Activated CD8-positive, alpha-beta T cell treated with anti-CD3 and anti-CD28 coated beads, Interleukin-2, amount 10 ng/mL, durations not matched to agents 7 days and 5 days (primary cell): ENCODE measurements at regions of chr5 and their contacts with region 1.

Region 1: GRCh38 chr5:142922223-142922952 is 152.2 kb downstream of the ARHGAP26 start:
- DNase-seq: no peak
- ATAC-seq: no peak
- H3K4me3 Mint-ChIP-seq: no peak overlapping the region
- H3K27ac Mint-ChIP-seq: no peak overlapping the region
- H3K4me1 Mint-ChIP-seq: peaks cover 41% of the 10 kb centered on the region
- H3K27me3 Mint-ChIP-seq: no peaks in the 10 kb centered on the region

Region 2: GRCh38 chr5:142826741-142827732 is 95.4 kb before region 1 on chr5:
- CTCF ChIA-PET with region 1: no interaction called
- POLR2A ChIA-PET with region 1: no interaction called
- DNase-seq: peak; percentile 48
- ATAC-seq: peak; percentile 73
- H3K4me3 Mint-ChIP-seq: no peak overlapping the region
- H3K27ac Mint-ChIP-seq: no peak overlapping the region
- H3K4me1 Mint-ChIP-seq: peaks cover 54% of the 10 kb centered on the region
- H3K27me3 Mint-ChIP-seq: no peaks in the 10 kb centered on the region

Region 3: DNA sequence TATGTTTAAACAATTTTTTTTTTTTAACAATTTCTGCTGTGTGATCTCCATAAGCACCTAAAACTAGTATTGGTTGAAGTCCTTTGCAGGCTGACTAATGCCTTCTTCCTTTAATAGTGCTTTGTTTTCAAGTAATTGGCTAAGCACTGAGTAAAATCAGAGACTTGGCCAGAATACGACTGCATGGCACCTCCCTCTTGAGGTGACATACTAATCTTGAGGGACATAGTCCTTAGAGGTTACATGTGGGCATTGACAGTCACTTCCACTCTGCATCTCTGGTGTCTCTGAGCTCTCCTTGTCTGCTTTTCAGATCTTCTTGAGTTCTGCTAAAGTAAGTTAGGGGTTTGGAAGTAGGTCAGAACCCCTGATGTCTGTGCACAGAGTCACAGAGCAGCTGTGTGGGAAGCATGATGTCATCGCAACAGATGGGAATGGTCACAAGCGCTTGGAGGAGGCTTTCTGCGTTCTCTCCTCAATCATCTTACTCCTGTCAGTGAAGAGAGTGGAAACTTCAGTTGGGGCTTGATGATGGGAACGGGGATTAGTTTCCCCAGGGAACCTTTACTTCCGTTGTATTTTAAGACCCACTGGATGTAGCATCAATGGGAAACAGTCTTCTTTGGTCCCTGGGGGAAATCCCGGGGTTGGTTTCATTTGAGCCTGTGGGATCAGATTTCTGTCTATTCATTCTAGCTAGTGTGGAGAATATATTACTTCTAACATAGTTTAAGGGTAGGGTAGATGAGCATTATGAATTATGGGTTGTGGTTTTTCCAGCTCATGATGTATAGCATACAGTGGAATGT is 15.3 kb before region 1 on chr5:
- CTCF ChIA-PET with region 1: no interaction called
- POLR2A ChIA-PET with region 1: no interaction called
- DNase-seq: no peak
- ATAC-seq: no peak
- H3K4me3 Mint-ChIP-seq: no peak overlapping the region
- H3K27ac Mint-ChIP-seq: no peak overlapping the region
- H3K4me1 Mint-ChIP-seq: no peaks in the 10 kb centered on the region
- H3K27me3 Mint-ChIP-seq: no peaks in the 10 kb centered on the region

Region 4: GRCh38 chr5:142959683-142960657 is 37.6 kb after region 1 on chr5:
- CTCF ChIA-PET with region 1: interaction called, 14 read pairs
- POLR2A ChIA-PET with region 1: no interaction called
- DNase-seq: no peak
- ATAC-seq: peak; percentile 49
- H3K4me3 Mint-ChIP-seq: no peak overlapping the region
- H3K27ac Mint-ChIP-seq: no peak overlapping the region
- H3K4me1 Mint-ChIP-seq: peaks cover 30% of the 10 kb centered on the region
- H3K27me3 Mint-ChIP-seq: no peaks in the 10 kb centered on the region

Region 5: GRCh38 chr5:143008809-143009521 is 86.6 kb after region 1 on chr5:
- CTCF ChIA-PET with region 1: interaction called, 52 read pairs
- POLR2A ChIA-PET with region 1: no interaction called
- DNase-seq: peak; percentile 90
- ATAC-seq: peak; percentile 93
- H3K4me3 Mint-ChIP-seq: peak overlapping the region; percentile 43
- H3K27ac Mint-ChIP-seq: peak overlapping the region; percentile 90
- H3K4me1 Mint-ChIP-seq: peaks cover 76% of the 10 kb centered on the region
- H3K27me3 Mint-ChIP-seq: no peaks in the 10 kb centered on the region

Region 6: GRCh38 chr5:143041972-143042770 is 119.8 kb after region 1 on chr5:
- CTCF ChIA-PET with region 1: no interaction called
- POLR2A ChIA-PET with region 1: no interaction called
- DNase-seq: no peak
- ATAC-seq: no peak
- H3K4me3 Mint-ChIP-seq: no peak overlapping the region
- H3K27ac Mint-ChIP-seq: no peak overlapping the region
- H3K4me1 Mint-ChIP-seq: peaks cover 16% of the 10 kb centered on the region
- H3K27me3 Mint-ChIP-seq: no peaks in the 10 kb centered on the region